Heart left ventricle (tissue), 16 donors: ENCODE measurements at regions of chr7 and their contacts with region 1.

Region 1: GRCh38 chr7:73557108-73557396 is 438 bp downstream of the BCL7B start:
- DNase-seq: peak; percentile 95 to 97 (median 96)
- ATAC-seq: peak; percentile 90 to 97 (median 96)
- H3K4me3 ChIP-seq: peak overlapping the region; percentile 31 to 96 (median 83)
- H3K27ac ChIP-seq: peak overlapping the region; percentile 96 to 100 (median 99)
- H3K4me1 ChIP-seq: peaks cover 0 to 37% (median 21%) of the 10 kb centered on the region in 12 donors
- H3K27me3 ChIP-seq: no peaks in the 10 kb centered on the region
- CTCF ChIP-seq: no peak
- POLR2A ChIP-seq: peak in 1 of 2 donors; percentile 44

Region 2: GRCh38 chr7:73522105-73522872 is 34.8 kb before region 1 on chr7 and contains the start of gene BAZ1B:
- intact Hi-C with region 1: loop called in 6 of 10 experiments (anchors 1 to 5 kb)
- DNase-seq: peak; percentile 99
- ATAC-seq: peak; percentile 98 to 99 (median 98)
- H3K4me3 ChIP-seq: peak within 1 kb of the TSS; percentile 59 to 99 (median 90)
- H3K27ac ChIP-seq: peak within 1 kb of the TSS; percentile 81 to 97 (median 94)
- H3K4me1 ChIP-seq: peaks cover 11 to 64% (median 36%) of the 10 kb centered on the region in 12 donors
- H3K27me3 ChIP-seq: no peaks in the 10 kb centered on the region
- CTCF ChIP-seq: peak in 7 of 12 donors; percentile 6 to 47 (median 20)
- POLR2A ChIP-seq: peak; percentile 32 to 75
- total RNA-seq, gene BAZ1B: 30.1 to 45.0 (median 41.5) TPM